Activated naive CD4-positive, alpha-beta T cell treated with anti-CD3 and anti-CD28 coated beads, Interleukin-2, amount 10 ng/mL, durations not matched to agents 7 days and 5 days (primary cell): ENCODE measurements at regions of chr3 and their contacts with region 1.

Region 1: GRCh38 chr3:157136647-157137387 is 23.1 kb downstream of the CCNL1 start:
- DNase-seq: no peak
- H3K4me3 Mint-ChIP-seq: no peak overlapping the region
- H3K27ac Mint-ChIP-seq: peak overlapping the region; percentile 76
- H3K4me1 Mint-ChIP-seq: peaks cover 63% of the 10 kb centered on the region
- H3K27me3 Mint-ChIP-seq: no peaks in the 10 kb centered on the region

Region 2: GRCh38 chr3:156483961-156484787 is 652.6 kb before region 1 on chr3:
- CTCF ChIA-PET with region 1: interaction called, 18 read pairs
- DNase-seq: peak; percentile 63
- H3K4me3 Mint-ChIP-seq: peak overlapping the region; percentile 50
- H3K27ac Mint-ChIP-seq: peak overlapping the region; percentile 93
- H3K4me1 Mint-ChIP-seq: peaks cover 40% of the 10 kb centered on the region
- H3K27me3 Mint-ChIP-seq: peaks cover 2% of the 10 kb centered on the region

Region 3: GRCh38 chr3:156542715-156543555 is 593.9 kb before region 1 on chr3:
- CTCF ChIA-PET with region 1: interaction called, 10 read pairs
- DNase-seq: no peak
- H3K4me3 Mint-ChIP-seq: no peak overlapping the region
- H3K27ac Mint-ChIP-seq: no peak overlapping the region
- H3K4me1 Mint-ChIP-seq: peaks cover 26% of the 10 kb centered on the region
- H3K27me3 Mint-ChIP-seq: no peaks in the 10 kb centered on the region

Region 4: GRCh38 chr3:156674046-156674910 is 462.5 kb before region 1 on chr3 and contains the start of gene TIPARP:
- CTCF ChIA-PET with region 1: interaction called, 20 read pairs
- DNase-seq: peak; percentile 99
- H3K4me3 Mint-ChIP-seq: peak within 1 kb of the TSS; percentile 85
- H3K27ac Mint-ChIP-seq: peak within 1 kb of the TSS; percentile 98
- H3K4me1 Mint-ChIP-seq: peaks cover 45% of the 10 kb centered on the region
- H3K27me3 Mint-ChIP-seq: peaks cover 11% of the 10 kb centered on the region

Region 5: DNA sequence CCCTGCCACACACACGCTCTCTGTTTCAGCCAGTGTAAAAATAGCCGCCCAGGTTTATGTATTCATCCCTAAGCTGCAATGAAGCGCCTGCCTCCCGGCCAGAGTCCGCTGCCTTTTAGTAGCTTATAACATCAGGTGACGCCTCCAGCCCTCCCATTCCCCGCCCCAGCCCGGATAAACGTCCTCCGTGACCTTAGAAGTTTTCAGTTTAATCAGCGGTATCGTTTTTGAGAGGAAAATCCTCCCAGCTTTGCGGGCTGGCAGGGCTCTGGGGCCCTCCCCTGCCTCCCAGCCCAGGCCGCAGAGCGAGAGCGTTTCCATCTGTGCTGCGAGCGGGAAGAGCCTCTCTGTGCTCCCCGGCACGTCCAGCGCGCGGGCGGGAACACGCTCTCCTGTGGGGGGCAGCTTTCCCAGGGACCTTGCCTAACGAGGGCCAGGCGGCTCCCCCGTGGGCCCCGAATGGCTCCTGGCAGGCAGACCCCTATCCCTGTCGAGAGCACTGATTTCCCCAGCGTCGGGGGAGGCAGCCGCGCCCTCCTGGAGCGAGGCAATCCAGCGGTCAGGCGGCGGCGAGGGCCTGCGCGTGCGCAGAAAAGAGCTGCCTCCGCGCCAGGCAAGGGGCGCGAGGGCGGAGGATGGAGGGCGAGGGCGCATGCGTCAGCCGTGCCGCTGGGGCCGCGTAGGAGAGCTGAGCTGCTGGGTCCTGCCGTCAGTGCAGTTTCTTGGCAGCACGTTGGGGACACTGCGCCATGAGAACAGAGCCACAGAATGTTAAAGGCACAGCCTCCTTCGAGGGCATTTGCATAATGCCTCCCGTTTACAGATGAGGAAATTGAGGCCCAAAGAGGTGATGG is 48.0 kb before region 1 on chr3:
- CTCF ChIA-PET with region 1: interaction called, 66 read pairs
- DNase-seq: peak; percentile 96
- H3K4me3 Mint-ChIP-seq: peak overlapping the region; percentile 79
- H3K27ac Mint-ChIP-seq: peak overlapping the region; percentile 99
- H3K4me1 Mint-ChIP-seq: peaks cover 58% of the 10 kb centered on the region
- H3K27me3 Mint-ChIP-seq: peaks cover 4% of the 10 kb centered on the region